Activated CD4-positive, alpha-beta memory T cell treated with anti-CD3 and anti-CD28 coated beads, Interleukin-2, amount 10 ng/mL, durations not matched to agents 7 days and 5 days (primary cell): ENCODE measurements at regions of chr12 and their contacts with region 1.

Region 1: GRCh38 chr12:64696080-64696741 is 63.0 kb downstream of the GNS start:
- DNase-seq: no peak
- H3K4me3 Mint-ChIP-seq: no peak overlapping the region
- H3K27ac Mint-ChIP-seq: peak overlapping the region; percentile 7
- H3K4me1 Mint-ChIP-seq: peaks cover 69% of the 10 kb centered on the region
- H3K27me3 Mint-ChIP-seq: no peaks in the 10 kb centered on the region

Region 2: GRCh38 chr12:64390275-64390851 is 305.8 kb before region 1 on chr12 and contains the start of gene C12orf56:
- CTCF ChIA-PET with region 1: no interaction called
- POLR2A ChIA-PET with region 1: no interaction called
- DNase-seq: peak; percentile 40
- H3K4me3 Mint-ChIP-seq: peak within 1 kb of the TSS; percentile 66
- H3K27ac Mint-ChIP-seq: no peak within 1 kb of the TSS
- H3K4me1 Mint-ChIP-seq: peaks cover 24% of the 10 kb centered on the region
- H3K27me3 Mint-ChIP-seq: peaks cover 21% of the 10 kb centered on the region
- total RNA-seq, gene C12orf56: 0.40 TPM in 1 of 2 experiments, not detected in the other

Region 3: GRCh38 chr12:64551698-64552097 is 144.5 kb before region 1 on chr12:
- CTCF ChIA-PET with region 1: interaction called, 118 read pairs
- POLR2A ChIA-PET with region 1: interaction called, 6 read pairs
- DNase-seq: no peak
- H3K4me3 Mint-ChIP-seq: no peak overlapping the region
- H3K27ac Mint-ChIP-seq: no peak overlapping the region
- H3K4me1 Mint-ChIP-seq: peaks cover 4% of the 10 kb centered on the region
- H3K27me3 Mint-ChIP-seq: peaks cover 7% of the 10 kb centered on the region

Region 4: DNA sequence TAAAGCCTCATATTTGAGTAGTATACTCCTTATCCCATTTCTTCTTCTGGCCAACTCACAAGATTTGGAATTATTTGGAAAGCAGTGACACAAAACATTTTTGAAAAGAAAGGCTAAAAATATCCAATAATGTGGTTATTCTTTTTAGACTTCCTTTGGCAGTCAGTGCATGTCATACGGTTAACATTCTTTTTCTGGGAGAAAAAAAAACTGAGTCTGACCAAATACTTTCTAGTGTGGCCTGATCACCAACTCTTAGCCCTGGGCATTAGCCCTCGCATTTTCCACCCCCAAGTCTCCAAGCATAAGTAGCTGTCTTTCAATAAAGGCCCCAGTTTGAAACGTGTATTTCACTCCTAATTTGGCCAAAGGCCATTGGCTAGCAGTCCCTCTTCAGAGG is 80.0 kb before region 1 on chr12:
- CTCF ChIA-PET with region 1: interaction called, 19 read pairs
- POLR2A ChIA-PET with region 1: interaction called, 18 read pairs
- DNase-seq: no peak
- H3K4me3 Mint-ChIP-seq: no peak overlapping the region
- H3K27ac Mint-ChIP-seq: no peak overlapping the region
- H3K4me1 Mint-ChIP-seq: peaks cover 54% of the 10 kb centered on the region
- H3K27me3 Mint-ChIP-seq: no peaks in the 10 kb centered on the region

Region 5: DNA sequence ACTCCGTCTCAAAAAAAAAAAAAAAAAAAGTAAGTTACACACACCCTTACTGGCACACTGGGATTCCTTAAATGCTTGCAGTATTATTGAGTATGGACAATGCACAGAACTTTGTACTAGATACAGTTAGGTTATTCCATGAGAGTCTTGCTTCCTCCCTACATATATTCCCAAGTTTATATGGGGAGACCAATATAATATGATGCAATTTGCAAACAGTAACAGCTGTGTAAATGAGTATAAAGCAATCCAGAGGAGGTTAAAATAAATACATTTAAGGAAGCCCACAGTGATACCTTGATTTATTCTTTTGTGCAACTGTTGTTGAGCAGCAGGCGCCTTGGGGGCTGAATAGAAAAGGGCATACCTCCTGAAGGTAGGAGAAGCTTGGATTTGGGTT is 59.4 kb before region 1 on chr12:
- CTCF ChIA-PET with region 1: interaction called, 10 read pairs
- POLR2A ChIA-PET with region 1: no interaction called
- DNase-seq: no peak
- H3K4me3 Mint-ChIP-seq: no peak overlapping the region
- H3K27ac Mint-ChIP-seq: no peak overlapping the region
- H3K4me1 Mint-ChIP-seq: peaks cover 50% of the 10 kb centered on the region
- H3K27me3 Mint-ChIP-seq: no peaks in the 10 kb centered on the region

Region 6: GRCh38 chr12:64669270-64669842 is 26.9 kb before region 1 on chr12:
- CTCF ChIA-PET with region 1: interaction called, 32 read pairs
- POLR2A ChIA-PET with region 1: interaction called, 12 read pairs
- DNase-seq: peak; percentile 60
- H3K4me3 Mint-ChIP-seq: peak overlapping the region; percentile 82
- H3K27ac Mint-ChIP-seq: peak overlapping the region; percentile 98
- H3K4me1 Mint-ChIP-seq: peaks cover 92% of the 10 kb centered on the region
- H3K27me3 Mint-ChIP-seq: no peaks in the 10 kb centered on the region

Region 7: DNA sequence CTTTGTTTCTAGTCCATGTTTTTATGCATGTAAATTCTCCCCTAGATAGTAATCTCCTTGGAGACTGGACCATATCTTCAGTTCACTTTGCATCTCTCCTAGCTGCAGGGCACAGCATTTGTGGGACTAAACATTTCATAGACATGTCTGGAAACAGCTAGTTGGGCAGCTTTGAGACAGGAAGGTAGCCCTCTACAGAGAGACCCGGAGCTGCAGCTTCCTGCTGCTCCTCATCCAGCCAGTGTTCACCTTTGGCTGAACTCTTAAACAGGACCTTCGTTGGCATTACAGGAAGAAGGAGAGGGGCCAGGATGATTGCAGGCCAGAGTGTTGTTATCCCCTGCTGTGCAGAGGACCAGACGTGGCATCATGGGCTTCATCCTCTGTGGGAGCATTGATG is 10.1 kb after region 1 on chr12:
- CTCF ChIA-PET with region 1: interaction called, 10 read pairs
- POLR2A ChIA-PET with region 1: interaction called, 3 read pairs
- DNase-seq: no peak
- H3K4me3 Mint-ChIP-seq: no peak overlapping the region
- H3K27ac Mint-ChIP-seq: no peak overlapping the region
- H3K4me1 Mint-ChIP-seq: peaks cover 6% of the 10 kb centered on the region
- H3K27me3 Mint-ChIP-seq: no peaks in the 10 kb centered on the region